Posterior vena cava (tissue), 2 donors: ENCODE measurements at regions of chr14 and their contacts with region 1.

Region 1: DNA sequence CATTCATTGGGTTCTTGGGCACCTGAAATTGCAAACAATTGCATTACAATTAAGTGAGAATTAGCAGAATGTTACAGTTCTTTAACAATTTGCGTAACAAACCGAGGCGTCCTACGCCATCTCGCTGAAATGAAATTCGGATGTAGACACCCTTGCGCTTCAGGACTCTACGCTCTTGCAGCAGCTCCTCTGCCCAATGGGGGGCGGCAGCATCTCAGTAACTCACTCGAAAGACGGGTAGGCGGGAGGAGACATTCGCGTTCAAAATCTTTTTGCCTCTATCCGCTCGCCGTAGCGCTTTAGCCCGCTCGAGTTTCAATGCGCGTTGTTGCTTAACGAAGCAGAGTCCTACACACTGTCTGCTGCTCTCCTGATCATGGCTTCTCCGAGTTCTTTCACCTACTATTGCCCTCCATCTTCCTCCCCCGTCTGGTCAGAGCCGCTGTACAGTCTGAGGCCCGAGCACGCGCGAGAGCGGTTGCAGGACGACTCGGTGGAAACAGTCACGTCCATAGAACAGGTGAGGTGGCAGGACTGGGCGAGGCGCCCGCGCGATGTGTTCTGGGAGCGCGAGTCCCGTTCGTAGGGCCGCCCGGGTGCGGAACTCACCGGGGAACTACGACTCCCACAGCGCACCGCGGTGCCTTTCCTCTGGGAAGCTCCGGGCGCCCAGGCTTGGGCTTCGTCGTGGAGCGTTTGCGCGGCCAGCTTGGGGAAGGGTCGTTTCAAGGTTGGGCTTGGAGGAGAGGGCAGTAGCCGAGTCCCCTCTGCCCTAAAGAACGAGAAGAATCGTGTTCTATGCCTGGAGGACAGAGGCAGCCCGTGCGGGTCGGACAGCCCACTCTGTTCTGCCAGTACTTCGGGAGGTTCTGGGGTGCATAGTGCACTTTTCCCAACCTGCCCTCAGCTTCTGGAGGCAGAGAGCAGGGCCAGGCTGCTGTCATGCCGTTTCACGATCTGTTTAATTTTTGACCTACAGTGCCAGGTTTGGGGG is at the start of gene FNTB:
- DNase-seq: peak; percentile 98
- total RNA-seq, gene FNTB: 8.0 to 14.8 TPM

Region 2: DNA sequence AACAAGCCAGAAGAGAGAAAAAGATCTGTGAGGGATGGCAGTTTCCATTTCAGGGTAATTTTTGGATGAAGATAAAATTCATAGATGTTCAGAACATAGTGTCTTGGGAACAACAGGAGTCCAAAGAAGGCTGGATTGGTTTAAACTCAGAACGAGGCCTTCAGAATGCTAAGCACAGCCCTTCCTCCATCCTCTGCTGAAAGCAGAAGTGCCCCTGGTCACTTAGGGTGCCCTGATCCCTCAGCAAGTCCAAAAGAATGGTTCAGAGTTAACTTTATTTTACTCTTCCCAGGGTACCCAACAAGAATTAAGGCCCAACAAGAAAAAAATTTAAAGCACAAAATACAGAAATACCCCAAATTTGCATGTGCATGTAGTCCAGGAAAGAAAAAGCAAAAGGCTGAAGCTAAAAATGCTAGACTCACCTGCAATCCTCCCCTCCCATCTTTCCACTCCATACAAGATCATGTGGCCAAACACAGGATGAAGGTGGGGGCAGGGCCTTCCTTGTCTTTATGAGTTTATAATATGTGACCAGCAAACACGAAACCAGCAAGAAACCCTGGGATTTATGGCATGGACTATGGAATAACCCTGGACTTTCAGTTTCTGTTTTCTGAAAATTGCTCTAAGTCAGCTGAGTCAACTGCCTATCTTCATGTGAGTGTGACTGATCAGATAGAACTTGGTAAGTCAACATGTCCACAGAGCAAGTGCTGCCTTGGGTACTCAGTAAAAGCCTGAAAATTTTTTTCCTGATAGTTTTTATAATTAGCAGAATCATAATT is 94.3 kb after region 1 on chr14:
- intact Hi-C with region 1: no loop called
- DNase-seq: no peak

Region 3: DNA sequence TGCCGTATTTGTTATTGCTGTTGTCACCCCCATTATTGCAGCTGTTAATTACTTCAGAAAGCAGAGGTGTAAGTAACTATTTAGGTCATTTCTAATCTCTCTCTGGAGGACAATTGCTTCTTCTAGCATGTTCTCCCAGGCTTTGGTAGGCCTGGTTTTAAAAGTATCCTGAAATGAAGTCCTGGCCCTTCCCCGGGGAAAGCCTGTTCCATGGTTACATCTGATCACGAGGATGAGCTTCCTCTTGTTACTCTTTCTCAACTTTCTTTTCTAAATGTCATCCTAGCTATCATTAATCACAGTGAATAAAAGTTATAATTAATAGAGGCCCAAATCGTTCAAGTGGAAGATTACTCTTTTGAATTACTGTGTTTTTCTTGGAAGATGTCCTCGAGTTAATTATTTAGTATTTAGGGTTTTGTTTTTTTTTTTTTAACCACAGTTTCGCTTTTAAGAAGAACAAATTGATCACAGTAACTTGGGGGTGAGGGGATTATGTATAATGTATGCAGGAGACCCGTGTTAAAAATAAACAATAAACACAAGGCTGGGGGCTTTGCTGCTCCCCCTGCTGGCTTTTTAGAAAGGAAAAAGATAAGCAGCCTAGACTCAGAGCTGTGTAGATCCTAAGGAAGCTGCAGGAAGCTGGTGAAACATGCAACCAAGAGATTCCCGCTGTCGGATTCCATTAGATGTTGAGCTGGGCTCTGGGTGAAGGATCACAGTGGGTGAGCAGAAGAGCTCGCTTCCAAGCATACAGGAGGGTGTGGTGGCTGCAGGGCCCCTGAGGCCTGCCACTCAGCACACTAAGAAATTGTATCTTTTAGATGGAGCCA is 845.8 kb after region 1 on chr14:
- intact Hi-C with region 1: loop called in 1 of 2 experiments (anchors 10 kb)
- DNase-seq: no peak